ENCODE measurements at regions of chr19 and their contacts with region 1.

Region 1: DNA sequence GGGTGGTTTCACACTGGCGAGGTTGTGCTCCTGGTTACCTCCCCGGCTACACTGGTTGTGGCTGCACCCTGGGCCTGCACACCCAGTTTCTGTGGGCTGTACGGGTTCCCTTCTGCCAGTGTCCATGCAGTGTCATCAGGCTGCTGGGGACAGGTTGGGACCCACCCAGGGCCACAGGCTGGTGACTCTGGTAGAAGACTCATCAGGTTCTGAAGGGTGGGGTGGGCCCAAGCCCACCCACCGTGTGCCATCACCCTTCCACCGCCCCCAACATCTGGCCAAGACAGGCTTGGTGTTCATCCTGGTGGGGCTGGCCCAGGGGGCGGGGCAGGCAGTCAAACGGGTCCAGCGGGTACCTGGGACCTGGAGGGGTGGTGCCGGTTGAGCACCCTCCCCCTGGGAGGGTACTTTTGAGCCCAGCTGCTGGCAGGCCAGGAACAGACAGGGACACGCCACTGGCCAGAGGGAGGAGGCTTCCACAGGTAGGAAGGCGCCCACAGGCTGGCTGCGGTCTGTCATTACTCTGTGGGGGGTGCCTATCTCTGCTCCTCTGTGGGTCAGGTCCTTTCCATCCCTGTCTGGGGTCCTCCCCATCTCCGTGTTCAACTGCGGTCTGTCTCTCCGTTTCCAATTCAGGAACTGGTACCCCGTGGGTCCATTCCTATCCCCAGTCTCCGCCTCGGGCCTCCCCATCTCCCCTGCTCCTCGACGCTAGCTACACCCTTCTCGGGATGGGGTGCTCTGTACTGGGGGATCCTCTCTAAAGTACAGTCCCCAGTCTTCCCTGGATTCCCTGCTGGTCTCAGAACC is at the start of gene RNF225:
- DNase-seq: peak; percentile 66 to 83
- H3K4me3 ChIP-seq: peak within 1 kb of the TSS; percentile 6 to 67 (median 36)
- H3K27ac ChIP-seq: no peak within 1 kb of the TSS
- H3K4me1 ChIP-seq: peaks cover 0 to 22% (median 13%) of the 10 kb centered on the region in 4 experiments; a peak in 5 of 7 replicates
- H3K27me3 ChIP-seq: peaks cover 3 to 17% (median 11%) of the 10 kb centered on the region in 4 experiments; a peak in 6 of 7 replicates
- CTCF ChIP-seq: no peak
- EP300 ChIP-seq: no peak
- POLR2A ChIP-seq: peak; percentile 24 to 84
- RAD21 ChIP-seq: no peak
- total RNA-seq, gene RNF225: 1.0 and 1.2 TPM in 2 replicates

Region 2: GRCh38 chr19:58305932-58306323 is 89.5 kb before region 1 on chr19:
- CTCF ChIA-PET with region 1: no interaction called
- POLR2A ChIA-PET with region 1: no interaction called
- DNase-seq: no peak
- H3K4me3 ChIP-seq: peak overlapping the region; percentile 87 to 99 (median 98)
- H3K27ac ChIP-seq: no peak overlapping the region
- H3K4me1 ChIP-seq: peaks cover 0 to 3% (median 1%) of the 10 kb centered on the region in 4 experiments; a peak in 3 of 7 replicates
- H3K27me3 ChIP-seq: no peaks in the 10 kb centered on the region
- CTCF ChIP-seq: no peak
- EP300 ChIP-seq: no peak
- POLR2A ChIP-seq: no peak
- RAD21 ChIP-seq: no peak

Region 3: GRCh38 chr19:58380722-58381466 is 14.5 kb before region 1 on chr19 and contains the start of gene ZNF837:
- CTCF ChIA-PET with region 1: no interaction called
- POLR2A ChIA-PET with region 1: interaction called, 78 read pairs
- DNase-seq: peak; percentile 96 to 100
- H3K4me3 ChIP-seq: peak within 1 kb of the TSS; percentile 56 to 77 (median 64)
- H3K27ac ChIP-seq: peak within 1 kb of the TSS; percentile 72; the same call in 1 of the 2 replicates
- H3K4me1 ChIP-seq: peaks cover 0 to 11% (median 8%) of the 10 kb centered on the region in 4 experiments; a peak in 6 of 7 replicates
- H3K27me3 ChIP-seq: no peaks in the 10 kb centered on the region
- CTCF ChIP-seq: no peak
- EP300 ChIP-seq: no peak
- POLR2A ChIP-seq: peak; percentile 89 to 92
- RAD21 ChIP-seq: no peak; a peak in 1 of 4 replicates
- total RNA-seq, gene ZNF837: 1.9 and 2.7 TPM in 2 replicates

Region 4: DNA sequence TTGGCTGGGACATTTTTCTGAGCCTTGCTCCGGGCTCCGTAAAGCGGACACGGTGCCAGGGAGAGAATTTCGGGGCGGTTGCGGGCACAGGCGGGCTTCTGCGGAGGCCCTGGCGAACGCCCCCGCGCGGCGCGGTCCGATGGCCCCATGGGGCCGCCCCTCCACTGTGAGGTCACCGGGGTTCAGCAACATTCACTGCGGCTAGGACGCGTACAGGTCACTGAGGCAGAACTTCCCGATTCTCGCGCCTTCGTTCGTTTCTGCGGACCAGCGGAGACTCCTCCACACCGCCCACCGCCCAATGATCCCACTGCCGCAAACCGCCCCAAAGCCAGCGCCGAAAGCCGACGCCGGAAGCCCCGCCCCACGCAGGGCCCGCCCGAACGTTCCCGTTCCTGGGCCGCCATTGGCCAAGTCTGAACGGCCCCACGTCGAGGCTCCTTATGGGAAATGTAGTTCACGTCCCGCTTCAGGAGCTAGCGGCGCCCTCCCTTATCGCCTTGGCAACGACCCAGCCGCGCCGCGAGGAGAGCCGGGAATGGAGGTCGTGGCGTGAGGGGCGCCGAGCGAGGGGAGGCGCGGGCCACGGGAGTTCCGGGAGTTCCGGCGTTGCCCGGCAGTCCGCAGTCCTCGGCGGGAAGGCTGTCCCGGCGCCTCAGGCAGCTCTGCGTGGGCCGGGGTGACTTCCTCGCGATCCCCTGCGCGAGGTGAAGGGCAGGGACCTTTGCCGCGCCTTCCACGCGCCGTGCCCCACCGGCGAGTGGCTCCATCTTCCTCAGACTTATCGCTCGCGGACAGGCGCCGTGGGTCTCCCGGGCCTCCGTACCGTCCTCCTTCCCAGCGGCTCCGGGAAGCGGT is 13.0 kb after region 1 on chr19 and contains the start of gene ZNF584:
- CTCF ChIA-PET with region 1: no interaction called
- POLR2A ChIA-PET with region 1: interaction called, 14 read pairs
- DNase-seq: peak; percentile 74 to 93
- H3K4me3 ChIP-seq: peak within 1 kb of the TSS; percentile 76 to 85 (median 80)
- H3K27ac ChIP-seq: peak within 1 kb of the TSS; percentile 54; the same call in 1 of the 2 replicates
- H3K4me1 ChIP-seq: peaks cover 0 to 18% (median 9%) of the 10 kb centered on the region in 4 experiments; a peak in 5 of 7 replicates
- H3K27me3 ChIP-seq: peaks cover 0 to 7% (median 1%) of the 10 kb centered on the region in 4 experiments; a peak in 2 of 7 replicates
- CTCF ChIP-seq: no peak
- EP300 ChIP-seq: no peak
- POLR2A ChIP-seq: peak; percentile 85 to 90
- RAD21 ChIP-seq: 0 out of 4 replicates have a peak, but pooled peaks of 1 of the 2 experiments have one; percentile 2
- total RNA-seq, gene ZNF584: 4.5 and 5.2 TPM in 2 replicates

Region 5: DNA sequence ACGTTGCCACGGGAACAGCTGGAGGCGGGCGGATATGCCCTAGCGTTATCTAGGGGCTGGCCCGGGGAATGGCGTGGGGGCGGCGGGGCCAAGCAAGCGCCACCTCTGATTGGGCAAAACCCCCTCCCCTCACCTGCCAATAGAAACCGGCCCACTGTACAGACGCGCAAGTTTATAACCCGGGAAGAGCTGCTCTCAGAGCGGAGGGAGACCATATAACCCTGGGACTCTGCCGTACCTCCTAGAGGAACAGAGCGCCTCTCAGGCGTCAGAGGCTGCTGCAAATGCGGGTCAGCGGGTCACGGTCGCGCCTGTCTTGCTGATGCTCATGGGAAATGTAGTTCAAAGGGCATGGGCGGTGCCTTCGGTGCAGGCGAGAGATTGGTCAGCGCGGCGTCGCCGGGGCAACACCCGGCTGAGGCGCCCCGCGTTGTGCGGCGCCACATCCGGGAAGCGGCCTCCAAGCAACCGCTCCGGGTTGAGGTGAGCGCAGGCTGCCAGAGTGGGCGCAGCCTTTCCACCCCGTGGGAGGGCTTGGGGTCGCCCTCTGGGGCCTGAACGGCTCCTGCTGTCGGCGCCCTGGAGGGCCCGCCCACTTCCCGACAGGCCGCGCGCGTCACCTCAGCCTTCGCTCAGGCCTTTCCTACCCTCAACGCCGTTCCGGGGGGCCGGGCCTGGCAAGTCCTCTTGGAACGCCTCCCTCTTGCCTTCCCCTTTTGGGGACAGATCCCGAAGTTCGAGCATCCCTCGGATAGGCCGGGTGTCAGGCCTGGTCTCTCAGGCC is 80.5 kb after region 1 on chr19 and contains the start of gene ZNF446:
- CTCF ChIA-PET with region 1: no interaction called
- POLR2A ChIA-PET with region 1: no interaction called
- DNase-seq: peak; percentile 76 to 93
- H3K4me3 ChIP-seq: peak within 1 kb of the TSS; percentile 42 to 76 (median 70)
- H3K27ac ChIP-seq: peak within 1 kb of the TSS; percentile 65; the same call in 1 of the 2 replicates
- H3K4me1 ChIP-seq: peaks cover 0 to 6% (median 5%) of the 10 kb centered on the region in 4 experiments; a peak in 6 of 7 replicates
- H3K27me3 ChIP-seq: peaks cover 0 to 3% (median 0%) of the 10 kb centered on the region in 4 experiments; a peak in 3 of 7 replicates
- CTCF ChIP-seq: no peak
- EP300 ChIP-seq: no peak
- POLR2A ChIP-seq: peak in 1 of 2 experiments; percentile 73; a peak in 2 of 3 replicates
- RAD21 ChIP-seq: no peak; a peak in 1 of 4 replicates
- total RNA-seq, gene ZNF446: 4.1 and 4.3 TPM in 2 replicates

Region 6: DNA sequence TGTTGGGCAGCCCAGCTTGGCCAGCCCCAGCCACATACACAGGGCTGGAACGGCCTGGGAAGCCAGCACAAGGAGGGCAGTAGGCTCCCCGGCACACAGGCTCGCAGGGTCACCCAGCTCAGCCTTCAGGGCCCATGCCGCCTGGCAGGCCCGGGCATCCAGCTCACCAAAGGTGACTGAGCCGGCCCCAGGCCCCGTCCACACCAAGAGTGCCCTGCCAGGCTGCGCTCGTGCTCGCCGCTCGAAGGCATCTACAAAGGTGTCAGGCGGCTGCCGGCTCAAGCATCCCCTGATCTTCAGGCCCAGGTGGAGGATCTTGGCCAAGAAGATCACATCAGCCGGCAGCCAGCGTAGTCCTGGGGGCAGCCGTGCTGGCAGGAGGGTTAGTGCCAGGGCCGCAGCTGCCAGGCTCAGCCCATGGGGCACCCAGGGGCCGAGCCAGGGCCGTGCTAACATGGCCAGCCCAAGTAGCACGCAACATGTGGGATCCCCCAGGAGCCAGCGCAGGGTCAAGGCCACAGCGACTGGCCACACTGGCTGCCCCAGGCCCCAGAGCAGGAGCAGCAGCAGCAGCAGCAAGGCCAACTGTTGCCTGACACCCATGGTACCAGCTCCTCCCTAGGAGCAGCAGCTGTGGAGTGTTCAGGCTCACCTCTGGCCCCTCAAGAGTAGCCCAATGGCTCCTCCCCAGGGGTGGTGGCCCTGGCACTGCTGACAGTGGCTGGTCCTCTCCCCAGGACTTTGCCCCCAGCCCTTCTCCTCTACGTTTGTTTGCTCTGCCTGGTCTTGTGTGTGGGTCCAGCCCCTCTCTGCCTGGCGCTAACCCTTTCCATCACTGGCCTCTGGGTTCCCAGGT is 116.2 kb after region 1 on chr19 and contains the start of gene SLC27A5:
- CTCF ChIA-PET with region 1: no interaction called
- POLR2A ChIA-PET with region 1: no interaction called
- DNase-seq: no peak
- H3K4me3 ChIP-seq: no peak within 1 kb of the TSS
- H3K27ac ChIP-seq: no peak within 1 kb of the TSS
- H3K4me1 ChIP-seq: peaks cover 0 to 18% (median 11%) of the 10 kb centered on the region in 4 experiments; a peak in 6 of 7 replicates
- H3K27me3 ChIP-seq: no peaks in the 10 kb centered on the region
- CTCF ChIP-seq: no peak
- EP300 ChIP-seq: no peak
- POLR2A ChIP-seq: no peak
- RAD21 ChIP-seq: no peak
- total RNA-seq, gene SLC27A5: 20.7 and 25.1 TPM in 2 replicates

Measured in H1 (cell line).